Upper lobe of right lung (tissue), 1 donor: ENCODE measurements at regions of chr12 and their contacts with region 1.

Region 1: DNA sequence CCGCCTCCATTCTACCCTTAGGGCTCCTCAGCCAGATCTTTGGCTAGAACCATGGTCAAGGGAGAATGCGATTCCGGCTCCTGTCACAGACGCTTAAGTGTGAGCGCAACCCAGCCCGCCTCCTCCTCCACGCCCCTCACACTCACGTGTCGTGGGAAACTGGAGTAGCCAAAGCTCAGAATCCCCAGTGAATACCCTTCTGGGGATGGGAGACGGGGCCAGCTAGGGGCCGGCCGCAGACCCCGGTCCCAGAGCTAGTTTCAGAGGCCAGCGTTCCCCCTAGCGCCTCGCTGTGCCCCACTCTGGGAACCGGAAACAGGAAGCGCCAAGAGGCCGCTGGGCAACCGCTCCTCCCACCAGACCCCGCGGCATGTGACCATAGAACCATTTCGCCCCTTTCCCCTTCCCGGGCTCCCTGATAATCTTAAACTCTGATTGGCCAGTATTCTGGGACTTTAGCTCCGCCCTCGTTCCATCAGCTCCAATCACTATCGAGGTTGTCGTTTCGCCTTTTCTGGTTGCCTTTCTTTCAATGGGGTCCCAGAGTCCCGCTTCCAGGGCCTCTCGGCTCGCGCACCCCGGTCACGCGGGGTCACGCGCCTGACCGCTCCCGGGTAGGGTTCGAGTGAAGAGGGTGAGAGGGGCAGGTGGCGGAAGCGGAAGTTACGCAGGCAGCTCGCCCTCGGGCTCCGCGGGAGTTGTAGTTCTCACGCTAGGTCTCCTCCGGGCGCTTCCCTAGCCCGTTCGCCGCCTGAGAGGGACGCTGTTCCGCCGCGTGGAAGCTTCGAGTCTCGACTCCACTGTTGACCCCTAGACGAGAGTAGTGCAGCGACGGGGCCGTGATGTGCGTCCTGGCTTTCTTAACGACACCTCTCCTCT is at the start of gene M6PR:
- DNase-seq: peak; percentile 97
- ATAC-seq: peak; percentile 95
- H3K4me3 ChIP-seq: peak within 1 kb of the TSS; percentile 95
- H3K27ac ChIP-seq: peak within 1 kb of the TSS; percentile 99
- H3K4me1 ChIP-seq: peaks cover 24% of the 10 kb centered on the region
- H3K27me3 ChIP-seq: no peaks in the 10 kb centered on the region
- CTCF ChIP-seq: peak; percentile 60
- total RNA-seq, gene M6PR: 176 TPM

Region 2: GRCh38 chr12:9039397-9039977 is 89.9 kb after region 1 on chr12:
- intact Hi-C with region 1: loop called (anchors 10 kb)
- DNase-seq: no peak
- ATAC-seq: peak; percentile 83
- H3K4me3 ChIP-seq: no peak overlapping the region
- H3K27ac ChIP-seq: no peak overlapping the region
- H3K4me1 ChIP-seq: no peaks in the 10 kb centered on the region
- H3K27me3 ChIP-seq: no peaks in the 10 kb centered on the region
- CTCF ChIP-seq: peak; percentile 79